Head of caudate nucleus (tissue), 42 donors: ENCODE measurements at regions of chr19 and their contacts with region 1.

Region 1: GRCh38 chr19:46076951-46077816 is 36.4 kb upstream of the IGFL4 start:
- DNase-seq: peak; percentile 69 to 95 (median 87)

Region 2: GRCh38 chr19:46025835-46026234 is 51.3 kb before region 1 on chr19:
- intact Hi-C with region 1: loop called (anchors 5 kb)
- DNase-seq: no peak

Region 3: DNA sequence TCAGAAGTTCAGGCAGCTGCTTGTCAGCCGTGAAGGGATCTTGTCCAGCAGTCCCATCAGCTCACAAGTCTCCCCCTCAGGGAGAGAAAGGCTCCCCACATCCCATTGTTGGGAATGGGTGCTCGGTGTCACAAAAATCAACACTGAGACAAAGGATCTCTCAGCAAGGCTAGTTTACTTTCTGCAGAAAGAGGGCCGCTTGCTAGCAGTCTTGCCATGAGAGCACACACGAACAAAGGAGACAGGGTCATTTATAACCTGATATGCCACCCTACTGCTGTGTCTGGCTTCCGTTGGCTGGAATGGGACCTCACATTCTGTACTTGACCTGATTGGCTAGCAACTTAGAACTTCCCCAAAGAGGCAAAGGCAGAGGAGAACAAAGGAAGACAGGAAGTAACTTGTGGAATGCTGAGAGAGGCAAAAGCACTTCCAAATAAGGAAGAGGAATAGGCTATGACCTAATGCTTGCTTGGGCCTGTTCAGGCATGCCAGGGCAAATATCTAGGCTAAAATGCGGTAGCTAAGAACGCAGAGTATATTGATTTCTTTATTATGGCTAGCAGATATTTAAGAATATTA is 56.0 kb after region 1 on chr19:
- intact Hi-C with region 1: no loop called
- DNase-seq: peak in 12 of 42 donors; percentile 11 to 51 (median 26)

Region 4: DNA sequence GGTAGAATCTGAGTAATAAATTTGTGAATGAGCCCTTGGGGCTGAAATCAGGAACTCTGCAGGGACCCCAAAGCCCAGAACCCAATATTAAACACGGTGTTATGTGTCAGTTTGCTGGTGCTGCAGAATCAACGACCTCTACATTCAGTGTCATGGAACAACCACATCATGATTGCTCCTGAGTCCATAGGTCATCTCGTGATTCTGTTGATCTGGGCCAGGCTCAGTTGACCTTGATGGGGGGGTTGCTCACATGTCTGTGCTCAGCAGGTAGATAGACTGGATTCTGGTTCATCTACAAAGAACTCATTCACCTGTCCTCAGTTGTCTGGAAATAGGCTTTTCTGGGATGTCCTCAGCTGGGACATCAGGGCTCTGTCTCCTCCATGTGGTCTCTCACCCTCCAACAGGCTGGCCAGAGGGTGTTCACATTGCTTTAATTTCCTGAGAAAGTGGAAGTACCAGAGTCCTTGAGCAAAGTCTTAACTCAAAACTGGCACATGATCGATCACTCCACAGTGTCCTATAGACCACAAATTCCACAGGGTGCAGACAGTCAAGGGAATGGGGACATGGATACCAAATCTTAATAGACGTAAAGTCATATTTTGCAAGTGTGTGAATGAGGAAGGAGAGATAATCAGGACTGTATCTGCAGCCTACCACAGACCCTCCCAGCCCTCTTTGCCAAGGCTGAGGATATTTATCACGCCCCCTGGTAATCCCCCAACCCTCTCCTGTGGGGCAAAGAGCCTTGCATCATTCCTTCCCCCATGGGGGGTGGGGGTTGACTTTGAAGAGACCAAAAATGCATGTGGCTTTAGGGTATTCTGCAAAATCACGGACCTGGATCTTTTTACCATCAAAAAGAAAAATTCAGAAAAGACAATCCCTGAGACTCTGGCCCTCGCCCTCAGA is 113.0 kb after region 1 on chr19:
- intact Hi-C with region 1: loop called (anchors 2 kb)
- DNase-seq: no peak

Region 5: GRCh38 chr19:46265217-46265828 is 188.1 kb after region 1 on chr19:
- intact Hi-C with region 1: loop called (anchors 5 kb)
- DNase-seq: peak; percentile 15 to 90 (median 71)